T-cell (primary cell): ENCODE measurements at regions of chr1 and their contacts with region 1.

Region 1: GRCh38 chr1:41751804-41752513 is 166.8 kb downstream of the HIVEP3 start:
- DNase-seq: peak in 1 of 35 experiments; percentile 40
- ATAC-seq: peak in 1 of 4 experiments; percentile 6
- H3K4me3 ChIP-seq: no peak overlapping the region
- H3K4me3 Mint-ChIP-seq: peak overlapping the region in 1 of 3 donors; percentile 50
- H3K27ac ChIP-seq: peak overlapping the region; percentile 5
- H3K27ac Mint-ChIP-seq: peak overlapping the region in 1 of 2 donors; percentile 22
- H3K4me1 ChIP-seq: peaks cover 20 to 49% of the 10 kb centered on the region in 2 experiments
- H3K4me1 Mint-ChIP-seq: peaks cover 46 to 56% (median 48%) of the 10 kb centered on the region in 3 donors
- H3K27me3 ChIP-seq: no peaks in the 10 kb centered on the region
- H3K27me3 Mint-ChIP-seq: no peaks in the 10 kb centered on the region

Region 2: DNA sequence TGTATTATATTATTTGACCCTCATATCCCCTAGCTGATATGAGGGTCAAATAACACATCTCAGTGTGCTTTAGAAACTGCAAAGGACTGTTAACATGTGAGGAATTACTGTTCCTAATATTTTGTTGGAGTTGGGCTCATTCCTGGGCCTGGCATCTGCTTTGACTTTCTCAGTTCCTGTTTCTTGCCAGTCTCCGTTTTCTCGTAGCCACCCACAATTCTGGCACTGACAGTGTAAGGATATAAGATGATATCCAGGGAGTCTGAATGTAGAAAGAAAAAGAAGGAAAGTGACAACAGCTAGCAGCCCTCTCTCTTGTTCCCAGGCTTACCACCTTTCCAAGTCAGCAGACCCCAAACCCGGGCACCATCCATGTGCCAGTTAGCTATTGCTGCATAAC is 455.5 kb before region 1 on chr1:
- CTCF ChIA-PET with region 1: no interaction called
- POLR2A ChIA-PET with region 1: no interaction called
- DNase-seq: no peak
- ATAC-seq: no peak
- H3K4me3 ChIP-seq: no peak overlapping the region
- H3K4me3 Mint-ChIP-seq: no peak overlapping the region
- H3K27ac ChIP-seq: no peak overlapping the region
- H3K27ac Mint-ChIP-seq: no peak overlapping the region
- H3K4me1 ChIP-seq: no peaks in the 10 kb centered on the region
- H3K4me1 Mint-ChIP-seq: no peaks in the 10 kb centered on the region
- H3K27me3 ChIP-seq: peaks cover 0 to 9% of the 10 kb centered on the region in 2 experiments
- H3K27me3 Mint-ChIP-seq: peaks cover 6 to 13% of the 10 kb centered on the region in 2 donors

Region 3: DNA sequence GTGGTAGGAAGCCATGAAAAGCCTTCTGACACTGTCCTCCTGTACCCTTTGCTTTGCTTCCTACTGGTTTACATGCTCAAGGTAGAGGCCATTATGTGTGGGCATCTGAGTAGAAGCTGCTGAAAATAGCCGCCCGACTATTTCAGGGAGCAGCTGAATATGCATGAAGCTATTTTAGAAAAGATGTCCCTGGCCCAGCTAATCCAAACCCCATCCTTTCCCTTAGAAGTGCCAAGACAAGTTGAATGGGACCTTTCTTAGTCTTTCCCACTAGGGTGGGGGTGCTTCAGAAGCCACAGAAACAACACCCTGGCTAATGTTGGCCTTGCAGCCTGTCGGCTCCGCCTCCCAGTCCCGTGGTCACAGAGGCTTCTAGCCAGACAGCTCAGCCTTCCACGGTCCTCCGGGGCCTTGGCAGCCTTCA is 62.4 kb before region 1 on chr1:
- CTCF ChIA-PET with region 1: no interaction called
- POLR2A ChIA-PET with region 1: no interaction called
- DNase-seq: no peak
- ATAC-seq: no peak
- H3K4me3 ChIP-seq: no peak overlapping the region
- H3K4me3 Mint-ChIP-seq: no peak overlapping the region
- H3K27ac ChIP-seq: no peak overlapping the region
- H3K27ac Mint-ChIP-seq: no peak overlapping the region
- H3K4me1 ChIP-seq: peaks cover 0 to 29% of the 10 kb centered on the region in 2 experiments
- H3K4me1 Mint-ChIP-seq: peaks cover 23 to 31% (median 30%) of the 10 kb centered on the region in 3 donors
- H3K27me3 ChIP-seq: no peaks in the 10 kb centered on the region
- H3K27me3 Mint-ChIP-seq: no peaks in the 10 kb centered on the region

Region 4: GRCh38 chr1:41720861-41721410 is 31.0 kb before region 1 on chr1:
- CTCF ChIA-PET with region 1: no interaction called
- POLR2A ChIA-PET with region 1: no interaction called
- DNase-seq: peak in 1 of 35 experiments; percentile 29
- ATAC-seq: no peak
- H3K4me3 ChIP-seq: peak overlapping the region in 1 of 2 donors; percentile 31
- H3K4me3 Mint-ChIP-seq: peak overlapping the region; percentile 58 to 67 (median 64)
- H3K27ac ChIP-seq: no peak overlapping the region
- H3K27ac Mint-ChIP-seq: peak overlapping the region in 1 of 2 donors; percentile 72
- H3K4me1 ChIP-seq: peaks cover 0 to 14% of the 10 kb centered on the region in 2 experiments
- H3K4me1 Mint-ChIP-seq: peaks cover 14 to 32% (median 27%) of the 10 kb centered on the region in 3 donors
- H3K27me3 ChIP-seq: peaks cover 0 to 2% of the 10 kb centered on the region in 2 experiments
- H3K27me3 Mint-ChIP-seq: no peaks in the 10 kb centered on the region

Region 5: DNA sequence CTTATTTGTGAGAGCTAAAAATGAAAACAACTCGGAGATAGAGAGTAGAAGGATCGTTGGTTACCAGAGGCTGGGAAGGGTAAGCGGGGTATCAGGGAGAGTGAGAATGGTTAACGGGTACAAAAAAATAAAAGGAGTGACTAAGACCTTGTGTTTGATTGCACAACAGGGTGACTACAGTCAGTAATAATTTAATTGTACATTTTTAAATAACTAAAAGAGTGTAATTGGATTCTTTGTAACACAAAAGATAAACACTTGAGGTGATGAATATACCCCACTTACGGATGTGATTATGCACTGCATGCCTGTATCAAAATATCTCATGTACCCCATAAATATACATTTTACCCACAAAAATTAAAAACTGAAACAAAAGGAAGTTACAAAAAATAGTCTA is 553.7 kb after region 1 on chr1:
- CTCF ChIA-PET with region 1: interaction called in 1 of 2 experiments, 11 read pairs
- POLR2A ChIA-PET with region 1: no interaction called
- DNase-seq: no peak
- ATAC-seq: no peak
- H3K4me3 ChIP-seq: no peak overlapping the region
- H3K4me3 Mint-ChIP-seq: no peak overlapping the region
- H3K27ac ChIP-seq: no peak overlapping the region
- H3K27ac Mint-ChIP-seq: no peak overlapping the region
- H3K4me1 ChIP-seq: peaks cover 5% of the 10 kb centered on the region in 2 experiments
- H3K4me1 Mint-ChIP-seq: peaks cover 55 to 71% (median 56%) of the 10 kb centered on the region in 3 donors
- H3K27me3 ChIP-seq: no peaks in the 10 kb centered on the region
- H3K27me3 Mint-ChIP-seq: no peaks in the 10 kb centered on the region